Posterior cingulate gyrus (tissue), 11 donors: ENCODE measurements at regions of chr18 and their contacts with region 1.

Region 1: DNA sequence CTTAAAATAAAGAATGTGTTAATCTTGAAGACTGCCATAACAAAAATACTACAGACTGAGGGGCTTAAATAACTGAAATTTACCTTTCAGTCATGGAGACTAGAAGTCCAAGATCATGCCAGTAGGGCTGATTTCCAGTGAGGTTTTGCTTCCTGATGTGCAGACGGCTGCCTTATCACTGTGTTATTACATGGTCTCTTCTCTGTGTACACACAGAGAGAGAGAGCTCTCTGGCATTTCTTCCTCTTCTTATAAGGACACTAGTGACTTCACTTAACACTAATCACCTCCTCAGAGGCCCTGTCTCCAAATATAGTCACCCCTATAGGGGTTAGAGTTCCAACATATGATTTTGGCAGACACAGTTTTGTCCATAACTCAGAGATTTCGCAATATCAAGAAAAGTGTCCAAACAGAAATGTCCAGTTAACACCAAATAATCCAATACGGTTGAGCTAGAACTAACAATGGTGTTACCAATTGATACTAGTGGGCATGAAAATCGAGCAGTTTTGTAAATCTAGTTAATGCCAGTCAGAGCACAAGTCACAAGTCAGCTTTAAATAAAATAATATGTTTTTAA is 399.8 kb downstream of the ADCYAP1 start:
- DNase-seq: no peak

Region 2: GRCh38 chr18:995629-996028 is 308.9 kb before region 1 on chr18:
- intact Hi-C with region 1: no loop called
- DNase-seq: no peak

Region 3: GRCh38 chr18:1124495-1124894 is 180.0 kb before region 1 on chr18:
- intact Hi-C with region 1: no loop called
- DNase-seq: no peak

Region 4: GRCh38 chr18:1361936-1362335 is 57.5 kb after region 1 on chr18:
- intact Hi-C with region 1: loop called (anchors 10 kb)
- DNase-seq: no peak

Region 5: DNA sequence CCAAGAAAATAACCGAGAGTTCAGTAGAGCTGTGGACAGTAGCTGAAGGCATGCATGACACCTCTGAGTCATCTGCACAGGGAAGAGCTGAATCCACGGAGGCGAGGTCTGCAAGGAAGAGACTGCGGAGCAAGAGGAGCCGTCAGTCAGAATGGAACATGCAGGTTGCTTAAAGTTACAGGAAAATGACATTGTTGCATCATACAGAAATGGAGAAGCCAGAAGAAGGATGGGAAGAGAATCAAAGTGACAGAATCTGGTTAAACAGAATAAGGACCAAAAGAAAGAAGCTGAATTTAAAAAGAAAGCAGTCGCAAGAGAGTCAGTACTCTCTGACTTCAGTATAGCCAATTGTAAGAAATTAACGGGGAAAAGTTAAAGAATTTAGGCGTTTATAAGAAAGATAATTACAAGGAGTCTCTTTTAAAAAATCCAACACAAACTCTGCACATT is 134.0 kb after region 1 on chr18:
- intact Hi-C with region 1: no loop called
- DNase-seq: no peak

Region 6: GRCh38 chr18:1505856-1506255 is 201.4 kb after region 1 on chr18:
- intact Hi-C with region 1: no loop called
- DNase-seq: no peak